H1 (cell line): ENCODE measurements at regions of chr18 and their contacts with region 1.

Region 1: GRCh38 chr18:64409511-64409910 is 260.6 kb upstream of the LINC00305 start:
- DNase-seq: no peak
- H3K4me3 ChIP-seq: no peak overlapping the region
- H3K27ac ChIP-seq: no peak overlapping the region
- H3K4me1 ChIP-seq: no peaks in the 10 kb centered on the region
- H3K27me3 ChIP-seq: peaks cover 0 to 1% (median 0%) of the 10 kb centered on the region in 4 experiments; a peak in 1 of 7 replicates
- CTCF ChIP-seq: peak in 2 of 3 experiments; percentile 31 to 33; a peak in 2 of 4 replicates
- EP300 ChIP-seq: no peak
- POLR2A ChIP-seq: no peak
- RAD21 ChIP-seq: peak; percentile 50 to 58; a peak in 3 of 4 replicates

Region 2: DNA sequence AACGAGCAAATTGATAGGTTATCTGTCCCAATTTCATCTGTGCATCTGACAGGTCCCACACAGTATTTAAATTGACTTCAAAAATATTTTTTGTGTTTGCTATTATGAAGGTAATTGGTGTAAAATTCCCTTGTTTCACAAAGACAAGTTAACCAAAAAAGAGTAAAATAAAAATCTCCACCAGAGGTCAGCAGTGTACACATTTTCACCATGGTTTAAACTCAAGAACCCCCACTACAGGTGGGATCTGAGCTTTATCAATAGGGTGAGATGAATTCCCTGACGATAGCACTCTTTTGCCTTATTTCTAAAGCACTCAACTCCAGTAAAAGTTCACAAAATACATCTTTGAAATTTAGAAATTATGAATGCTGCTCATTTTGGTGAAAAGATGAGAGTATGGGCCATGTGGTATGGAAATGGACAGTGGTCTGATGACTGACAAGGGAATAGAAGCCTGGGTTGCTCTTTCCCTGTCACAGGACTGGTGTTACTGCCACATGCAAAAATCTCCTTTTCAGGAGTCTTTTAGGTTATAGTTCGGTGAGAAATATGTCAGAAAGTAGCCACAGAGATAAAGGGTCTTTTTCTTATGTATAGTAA is 371.6 kb before region 1 on chr18:
- CTCF ChIA-PET with region 1: interaction called, 12 read pairs
- POLR2A ChIA-PET with region 1: no interaction called
- DNase-seq: no peak
- H3K4me3 ChIP-seq: no peak overlapping the region
- H3K27ac ChIP-seq: no peak overlapping the region
- H3K4me1 ChIP-seq: no peaks in the 10 kb centered on the region
- H3K27me3 ChIP-seq: no peaks in the 10 kb centered on the region
- CTCF ChIP-seq: peak in 2 of 3 experiments; percentile 48 to 89; a peak in 3 of 4 replicates
- EP300 ChIP-seq: no peak
- POLR2A ChIP-seq: no peak
- RAD21 ChIP-seq: peak; percentile 80 to 81

Region 3: GRCh38 chr18:64330161-64330560 is 79.3 kb before region 1 on chr18:
- CTCF ChIA-PET with region 1: interaction called, 10 read pairs
- POLR2A ChIA-PET with region 1: no interaction called
- DNase-seq: no peak
- H3K4me3 ChIP-seq: no peak overlapping the region
- H3K27ac ChIP-seq: no peak overlapping the region
- H3K4me1 ChIP-seq: no peaks in the 10 kb centered on the region
- H3K27me3 ChIP-seq: no peaks in the 10 kb centered on the region
- CTCF ChIP-seq: peak in 2 of 3 experiments; percentile 63 to 73; a peak in 3 of 4 replicates
- EP300 ChIP-seq: no peak
- POLR2A ChIP-seq: no peak
- RAD21 ChIP-seq: peak; percentile 90 to 95

Region 4: GRCh38 chr18:64398320-64398719 is 11.2 kb before region 1 on chr18:
- CTCF ChIA-PET with region 1: interaction called, 19 read pairs
- POLR2A ChIA-PET with region 1: no interaction called
- DNase-seq: no peak
- H3K4me3 ChIP-seq: no peak overlapping the region
- H3K27ac ChIP-seq: no peak overlapping the region
- H3K4me1 ChIP-seq: 0 out of 7 replicates have a peak, but pooled peaks cover 0 to 3% (median 0%) of the 10 kb centered on the region in 4 experiments
- H3K27me3 ChIP-seq: no peaks in the 10 kb centered on the region
- CTCF ChIP-seq: no peak
- EP300 ChIP-seq: no peak
- POLR2A ChIP-seq: no peak
- RAD21 ChIP-seq: no peak

Region 5: DNA sequence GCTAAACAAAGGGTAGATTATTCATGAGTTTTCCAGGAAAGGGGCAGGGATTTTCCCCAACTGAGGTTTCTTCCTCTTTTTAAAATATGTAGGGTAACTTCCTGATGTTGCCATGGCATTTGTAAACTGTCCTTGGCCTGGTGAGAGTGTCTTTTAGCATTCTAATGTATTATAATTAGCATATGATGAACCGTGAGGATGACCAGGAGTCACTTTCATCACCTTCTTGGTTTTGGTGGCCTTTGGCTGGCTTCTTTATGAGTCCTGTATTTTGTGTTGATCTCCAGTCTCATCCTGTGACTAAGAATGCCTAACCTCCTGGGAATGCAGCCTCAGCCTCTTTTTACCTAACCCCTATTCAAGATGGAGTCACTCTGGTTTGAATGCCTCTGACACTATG is 130.3 kb after region 1 on chr18:
- CTCF ChIA-PET with region 1: no interaction called
- POLR2A ChIA-PET with region 1: no interaction called
- DNase-seq: no peak
- H3K4me3 ChIP-seq: no peak overlapping the region
- H3K27ac ChIP-seq: no peak overlapping the region
- H3K4me1 ChIP-seq: peaks cover 0 to 2% (median under 1%) of the 10 kb centered on the region in 4 experiments; a peak in 2 of 7 replicates
- H3K27me3 ChIP-seq: no peaks in the 10 kb centered on the region
- CTCF ChIP-seq: no peak
- EP300 ChIP-seq: no peak
- POLR2A ChIP-seq: no peak
- RAD21 ChIP-seq: no peak

Region 6: DNA sequence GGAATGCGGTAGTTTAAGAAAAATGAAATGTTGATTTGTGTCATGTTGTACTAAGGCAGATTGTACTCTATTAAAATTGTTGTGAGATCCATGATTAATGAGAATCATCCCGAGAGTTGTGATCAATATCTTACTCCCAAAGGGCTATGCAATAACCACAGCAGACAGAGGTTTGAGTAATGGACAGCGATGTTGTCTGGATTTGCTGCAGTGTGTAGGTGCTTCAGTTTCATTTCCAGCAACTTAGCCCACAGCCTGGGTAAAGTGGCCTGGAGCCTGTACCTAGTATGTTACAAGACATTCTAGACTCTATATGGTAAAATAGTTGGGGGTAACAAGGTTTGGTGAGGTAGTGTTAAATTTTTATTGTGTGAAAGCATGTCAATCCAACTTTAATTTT is 547.0 kb after region 1 on chr18:
- CTCF ChIA-PET with region 1: no interaction called
- POLR2A ChIA-PET with region 1: no interaction called
- DNase-seq: no peak
- H3K4me3 ChIP-seq: no peak overlapping the region
- H3K27ac ChIP-seq: no peak overlapping the region
- H3K4me1 ChIP-seq: no peaks in the 10 kb centered on the region
- H3K27me3 ChIP-seq: no peaks in the 10 kb centered on the region
- CTCF ChIP-seq: no peak
- EP300 ChIP-seq: no peak
- POLR2A ChIP-seq: no peak
- RAD21 ChIP-seq: no peak